Activated CD4-positive, alpha-beta memory T cell treated with anti-CD3 and anti-CD28 coated beads for 36 hours (primary cell): ENCODE measurements at regions of chr14 and their contacts with region 1.

Region 1: GRCh38 chr14:76962303-76962660 is 66.2 kb downstream of the IRF2BPL start:
- DNase-seq: no peak
- H3K4me3 Mint-ChIP-seq: peak overlapping the region; percentile 77
- H3K27ac Mint-ChIP-seq: peak overlapping the region; percentile 98
- H3K4me1 Mint-ChIP-seq: peaks cover 82% of the 10 kb centered on the region
- H3K27me3 Mint-ChIP-seq: peaks cover 3% of the 10 kb centered on the region

Region 2: GRCh38 chr14:76855066-76855465 is 107.2 kb before region 1 on chr14:
- CTCF ChIA-PET with region 1: no interaction called
- POLR2A ChIA-PET with region 1: no interaction called
- intact Hi-C with region 1: no loop called
- DNase-seq: no peak
- H3K4me3 Mint-ChIP-seq: no peak overlapping the region
- H3K27ac Mint-ChIP-seq: no peak overlapping the region
- H3K4me1 Mint-ChIP-seq: no peaks in the 10 kb centered on the region
- H3K27me3 Mint-ChIP-seq: peaks cover 8% of the 10 kb centered on the region

Region 3: DNA sequence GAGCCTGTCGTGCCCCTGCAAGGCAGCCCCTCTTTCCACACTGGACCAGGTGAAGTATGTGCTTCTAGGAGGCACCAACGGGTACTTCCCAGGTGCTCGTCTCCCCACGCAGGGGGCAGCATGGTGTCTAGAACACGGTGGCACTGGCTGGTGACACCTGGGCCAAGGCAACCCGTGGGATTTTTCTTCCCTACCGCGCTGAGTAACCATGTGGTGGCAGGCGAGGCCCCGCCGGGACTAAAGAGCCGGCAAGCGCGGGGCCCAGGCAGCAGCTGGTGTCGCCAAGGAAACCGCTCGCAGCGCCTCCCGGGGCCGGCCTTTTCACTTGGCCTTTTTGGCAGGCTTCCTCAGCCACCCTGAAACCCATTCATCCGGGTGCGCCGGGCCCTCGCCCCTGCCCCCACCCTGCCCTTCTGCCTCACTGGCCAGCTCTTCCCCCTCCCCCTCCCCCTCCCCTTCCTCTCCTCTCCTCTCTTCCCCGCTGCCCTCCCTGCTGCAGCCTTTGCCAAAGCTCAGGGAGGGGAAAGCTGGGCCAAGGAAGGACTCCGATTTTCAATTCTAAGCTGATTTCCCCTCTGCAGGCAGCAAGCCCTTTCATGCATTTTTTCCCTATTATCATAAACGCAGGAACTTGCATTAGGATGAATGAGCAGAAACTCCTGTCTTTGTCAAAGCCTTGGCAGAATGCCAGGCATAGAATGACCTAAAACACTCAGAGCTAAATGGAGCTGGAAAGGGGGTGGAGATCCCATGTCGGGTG is 15.0 kb before region 1 on chr14:
- CTCF ChIA-PET with region 1: interaction called, 15 read pairs
- POLR2A ChIA-PET with region 1: interaction called, 4 read pairs
- intact Hi-C with region 1: loop called (anchors 1 kb)
- DNase-seq: peak; percentile 91
- H3K4me3 Mint-ChIP-seq: peak overlapping the region; percentile 29
- H3K27ac Mint-ChIP-seq: peak overlapping the region; percentile 23
- H3K4me1 Mint-ChIP-seq: peaks cover 43% of the 10 kb centered on the region
- H3K27me3 Mint-ChIP-seq: no peaks in the 10 kb centered on the region

Region 4: DNA sequence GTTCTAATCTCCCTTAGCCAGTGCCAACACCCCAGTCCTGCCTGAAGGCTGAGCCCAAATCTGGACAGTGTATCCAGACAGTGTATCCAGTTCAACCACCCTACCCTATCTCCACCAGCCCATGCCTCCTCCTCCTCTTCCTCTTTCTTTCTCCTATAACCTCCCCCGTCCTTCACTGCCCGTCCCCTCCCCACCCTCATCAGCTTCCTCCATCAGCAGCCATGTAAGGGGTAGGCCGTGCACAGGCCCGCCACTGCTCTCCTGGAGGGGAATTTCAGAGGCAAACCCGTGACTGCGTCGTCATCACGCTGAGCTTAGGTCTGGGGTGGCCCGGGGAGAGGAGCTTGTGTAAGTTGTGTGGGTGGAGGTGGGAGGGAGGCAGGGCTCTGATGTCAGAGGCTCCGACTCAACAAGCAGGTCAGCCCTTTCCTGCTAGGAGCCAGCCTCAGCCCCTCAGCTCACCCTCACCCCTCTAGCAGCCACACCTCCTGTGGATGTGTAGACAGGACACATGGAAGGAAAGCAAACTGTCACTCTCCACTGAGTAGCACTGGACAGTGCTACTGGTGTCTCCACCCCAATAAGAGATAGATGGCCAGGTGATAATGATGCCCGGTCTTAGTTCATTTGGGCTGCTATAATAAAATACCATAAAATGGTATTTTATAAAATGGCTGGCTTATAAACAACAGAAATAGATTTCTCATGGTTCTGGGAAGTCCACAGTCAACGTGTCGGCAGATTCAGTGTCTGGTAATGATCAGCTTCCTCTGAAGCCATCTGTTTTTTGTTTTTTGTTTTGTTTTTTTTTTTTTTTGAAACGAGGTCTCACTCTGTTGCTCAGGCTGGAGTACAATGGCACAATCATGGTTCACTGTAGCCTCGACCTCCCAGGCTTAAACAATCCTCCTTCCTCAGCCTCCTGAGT is 15.8 kb after region 1 on chr14:
- CTCF ChIA-PET with region 1: interaction called, 8 read pairs
- POLR2A ChIA-PET with region 1: interaction called, 31 read pairs
- intact Hi-C with region 1: loop called (anchors 1 kb)
- DNase-seq: peak; percentile 94
- H3K4me3 Mint-ChIP-seq: peak overlapping the region; percentile 46
- H3K27ac Mint-ChIP-seq: peak overlapping the region; percentile 84
- H3K4me1 Mint-ChIP-seq: peaks cover 15% of the 10 kb centered on the region
- H3K27me3 Mint-ChIP-seq: no peaks in the 10 kb centered on the region

Region 5: GRCh38 chr14:77028384-77029231 is 66.3 kb after region 1 on chr14 and contains the start of gene IRF2BPL:
- CTCF ChIA-PET with region 1: interaction called, 18 read pairs
- POLR2A ChIA-PET with region 1: interaction called, 24 read pairs
- intact Hi-C with region 1: loop called (anchors 1 kb)
- DNase-seq: peak; percentile 97
- H3K4me3 Mint-ChIP-seq: peak within 1 kb of the TSS; percentile 82
- H3K27ac Mint-ChIP-seq: peak within 1 kb of the TSS; percentile 97
- H3K4me1 Mint-ChIP-seq: peaks cover 50% of the 10 kb centered on the region
- H3K27me3 Mint-ChIP-seq: no peaks in the 10 kb centered on the region
- total RNA-seq, gene IRF2BPL: 38.5 to 41.1 TPM

Region 6: GRCh38 chr14:77033622-77034521 is 71.6 kb after region 1 on chr14:
- CTCF ChIA-PET with region 1: interaction called, 5 read pairs
- POLR2A ChIA-PET with region 1: interaction called, 24 read pairs
- intact Hi-C with region 1: no loop called
- DNase-seq: peak; percentile 95
- H3K4me3 Mint-ChIP-seq: peak overlapping the region; percentile 94
- H3K27ac Mint-ChIP-seq: peak overlapping the region; percentile 98
- H3K4me1 Mint-ChIP-seq: peaks cover 72% of the 10 kb centered on the region
- H3K27me3 Mint-ChIP-seq: no peaks in the 10 kb centered on the region

Region 7: DNA sequence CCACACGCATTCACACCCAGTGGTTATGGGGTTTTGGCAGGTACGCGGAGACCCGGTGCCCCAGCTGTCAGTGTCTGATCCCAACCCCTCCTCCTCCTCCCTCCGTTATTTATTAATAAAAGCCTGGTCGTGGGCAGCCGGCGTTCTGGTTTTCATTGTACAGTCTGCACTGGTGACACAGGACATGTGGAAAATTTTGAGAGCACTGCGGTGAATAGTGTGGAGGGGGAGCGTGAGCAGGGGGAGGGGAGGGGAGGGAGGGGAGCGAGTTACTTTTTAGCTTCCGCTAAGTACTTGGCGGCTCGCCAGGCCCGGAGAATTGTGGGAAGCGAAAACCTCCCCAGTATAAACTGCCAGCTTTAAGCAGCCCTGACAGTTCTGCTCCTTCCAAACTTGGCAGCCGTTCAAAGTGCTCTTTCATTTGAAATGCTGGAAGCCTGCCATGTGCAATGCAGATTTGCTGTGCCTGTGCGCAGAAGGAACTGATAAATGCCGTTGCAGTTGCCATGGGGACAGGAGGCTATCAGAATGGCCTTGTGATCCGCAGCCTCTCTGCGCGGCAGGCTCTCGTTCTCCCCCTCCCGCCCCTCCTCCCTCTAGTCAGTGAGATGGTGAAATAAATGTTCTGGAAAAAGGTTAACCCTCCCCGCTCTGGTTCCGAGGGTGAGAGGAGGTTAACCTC is 77.9 kb after region 1 on chr14:
- CTCF ChIA-PET with region 1: interaction called, 9 read pairs
- POLR2A ChIA-PET with region 1: interaction called, 17 read pairs
- intact Hi-C with region 1: loop called (anchors 1 kb)
- DNase-seq: peak; percentile 97
- H3K4me3 Mint-ChIP-seq: peak overlapping the region; percentile 77
- H3K27ac Mint-ChIP-seq: peak overlapping the region; percentile 99
- H3K4me1 Mint-ChIP-seq: peaks cover 88% of the 10 kb centered on the region
- H3K27me3 Mint-ChIP-seq: no peaks in the 10 kb centered on the region